Sigmoid colon (tissue), 7 donors: ENCODE measurements at regions of chr5 and their contacts with region 1.

Region 1: GRCh38 chr5:96336351-96336985 is 96.6 kb downstream of the PCSK1 start:
- DNase-seq: peak; percentile 81
- H3K4me3 ChIP-seq: peak overlapping the region in 1 of 4 donors; percentile 20
- H3K27ac ChIP-seq: no peak overlapping the region
- H3K4me1 ChIP-seq: peaks cover 0 to 13% (median 4%) of the 10 kb centered on the region in 4 donors
- H3K27me3 ChIP-seq: no peaks in the 10 kb centered on the region
- CTCF ChIP-seq: peak; percentile 45 to 83 (median 80)
- EP300 ChIP-seq: no peak
- POLR2A ChIP-seq: no peak

Region 2: DNA sequence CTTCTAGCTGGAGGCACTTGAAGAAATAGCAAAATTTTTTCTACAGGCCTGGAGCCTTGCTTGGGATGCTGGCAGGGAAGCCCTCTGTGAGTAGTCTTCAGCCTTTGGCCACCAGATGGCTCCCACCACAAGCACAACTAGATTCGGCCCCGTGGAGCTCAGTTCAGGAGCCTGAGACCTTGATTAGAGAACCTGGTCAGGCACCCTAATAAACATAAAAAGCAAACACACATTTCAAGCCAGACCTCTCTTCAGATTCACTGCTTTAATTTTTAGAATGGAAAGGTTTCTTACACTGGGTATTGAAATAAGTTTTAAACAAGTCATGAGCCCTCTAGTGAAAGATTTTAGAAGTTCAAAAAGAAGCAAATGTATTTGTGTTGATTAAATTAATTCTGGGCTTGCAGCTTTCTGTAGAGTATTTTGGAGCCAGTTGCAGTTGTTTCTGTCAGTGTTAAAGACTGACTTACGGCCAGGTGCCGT is 555.3 kb before region 1 on chr5:
- intact Hi-C with region 1: loop called (anchors 5 kb)
- DNase-seq: peak; percentile 93
- H3K4me3 ChIP-seq: no peak overlapping the region
- H3K27ac ChIP-seq: peak overlapping the region; percentile 56 to 60 (median 58)
- H3K4me1 ChIP-seq: peaks cover 0 to 14% (median 7%) of the 10 kb centered on the region in 4 donors
- H3K27me3 ChIP-seq: no peaks in the 10 kb centered on the region
- CTCF ChIP-seq: peak; percentile 83 to 92 (median 86)
- EP300 ChIP-seq: no peak
- POLR2A ChIP-seq: no peak